Left ventricle myocardium superior (tissue), 1 donor: ENCODE measurements at regions of chr6 and their contacts with region 1.

Region 1: GRCh38 chr6:24630856-24631505 is 15.0 kb downstream of the KIAA0319 start:
- DNase-seq: no peak
- ATAC-seq: no peak

Region 2: DNA sequence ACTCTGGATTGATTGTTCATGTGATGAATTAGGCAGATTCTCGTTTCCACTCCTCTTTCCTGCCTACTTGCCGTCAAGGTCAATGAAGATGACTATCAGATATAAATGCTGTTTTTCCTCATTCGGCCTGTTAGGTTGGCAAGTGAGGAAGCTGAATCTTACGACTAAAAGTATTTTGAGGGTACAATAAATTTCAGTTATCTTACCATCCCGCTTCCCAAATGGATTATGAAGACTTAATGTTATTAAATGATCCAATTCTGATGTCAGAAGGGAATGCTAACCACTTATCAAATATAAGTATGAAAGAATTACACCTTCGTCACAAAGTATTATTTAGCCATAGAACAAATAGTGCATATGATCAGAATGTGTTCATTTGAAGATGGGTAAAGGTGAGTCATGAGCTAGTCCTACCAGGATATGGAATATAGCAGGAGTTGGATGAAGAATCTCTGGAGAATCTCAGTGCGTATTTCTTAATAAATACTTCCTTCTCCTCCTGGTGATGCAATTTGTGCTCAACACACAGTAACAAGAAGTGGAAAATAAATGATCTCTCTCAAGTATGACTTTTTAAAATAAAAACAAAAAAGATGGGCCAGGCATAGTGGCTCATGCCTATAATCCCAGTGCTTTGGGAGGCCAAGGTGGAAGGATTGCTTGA is 146.2 kb before region 1 on chr6:
- intact Hi-C with region 1: no loop called
- DNase-seq: no peak
- ATAC-seq: no peak

Region 3: DNA sequence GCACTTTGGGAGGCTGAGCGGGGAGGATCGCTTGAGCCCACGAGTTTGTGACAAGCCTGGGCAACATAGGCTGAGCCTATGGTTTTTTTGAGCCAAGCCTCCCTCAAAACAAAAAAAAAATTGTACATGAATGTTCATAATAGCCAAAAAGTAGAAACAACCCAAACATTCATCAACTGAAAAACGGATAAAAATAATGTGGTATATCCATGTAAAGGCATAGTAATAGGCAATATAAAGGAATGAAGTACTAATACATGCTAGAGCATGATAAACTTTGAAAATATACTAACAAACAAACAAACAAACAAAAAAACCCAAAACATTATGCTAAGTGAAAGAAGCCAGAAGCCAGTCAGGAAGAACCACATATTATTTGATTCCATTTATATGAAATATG is 20.3 kb before region 1 on chr6:
- intact Hi-C with region 1: loop called (anchors 1 kb)
- DNase-seq: no peak
- ATAC-seq: no peak